H1 (cell line): ENCODE measurements at regions of chr5 and their contacts with region 1.

Region 1: GRCh38 chr5:83927140-83927733 is 206.6 kb upstream of the HAPLN1 start:
- DNase-seq: peak; percentile 79 to 98
- H3K4me3 ChIP-seq: no peak overlapping the region
- H3K27ac ChIP-seq: no peak overlapping the region
- H3K4me1 ChIP-seq: no peaks in the 10 kb centered on the region
- H3K27me3 ChIP-seq: no peaks in the 10 kb centered on the region
- CTCF ChIP-seq: peak; percentile 58 to 93 (median 84)
- EP300 ChIP-seq: no peak
- POLR2A ChIP-seq: no peak
- RAD21 ChIP-seq: peak; percentile 94 to 95

Region 2: DNA sequence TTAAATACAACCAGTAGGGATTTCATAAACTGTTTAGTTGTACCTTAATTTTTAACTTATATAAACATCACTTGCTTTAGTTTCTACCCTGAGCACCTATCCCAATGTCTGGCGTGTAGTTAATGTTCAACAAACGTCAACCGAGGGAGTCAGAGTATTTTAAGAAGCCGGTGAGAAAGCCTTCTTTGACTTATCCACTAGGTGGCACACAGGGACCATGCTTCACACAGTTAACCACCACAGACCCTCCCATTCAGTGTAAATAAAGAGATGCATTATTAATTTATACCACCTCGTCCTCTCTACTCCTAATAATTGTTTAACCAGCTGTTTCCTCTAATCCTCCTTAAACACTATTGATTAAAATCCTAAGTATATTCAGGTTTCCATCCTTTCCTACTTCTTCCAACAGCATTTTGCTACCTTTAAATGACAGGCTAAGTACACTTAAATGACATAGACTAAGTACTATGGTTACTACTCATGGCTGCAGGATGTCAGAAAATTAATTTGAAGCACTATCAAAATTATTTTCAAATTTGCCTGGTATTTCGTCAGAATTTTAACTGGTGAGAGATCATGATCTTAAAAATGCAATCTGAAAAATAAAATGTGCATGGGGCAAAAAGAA is 208.9 kb before region 1 on chr5:
- CTCF ChIA-PET with region 1: interaction called, 29 read pairs
- POLR2A ChIA-PET with region 1: interaction called, 5 read pairs
- DNase-seq: no peak
- H3K4me3 ChIP-seq: no peak overlapping the region
- H3K27ac ChIP-seq: no peak overlapping the region
- H3K4me1 ChIP-seq: peaks cover 0 to 19% (median 10%) of the 10 kb centered on the region in 4 experiments; a peak in 4 of 7 replicates
- H3K27me3 ChIP-seq: peaks cover 0 to 2% (median 0%) of the 10 kb centered on the region in 4 experiments; a peak in 2 of 7 replicates
- CTCF ChIP-seq: peak in 2 of 3 experiments; percentile 71 to 79; a peak in 3 of 4 replicates
- EP300 ChIP-seq: no peak
- POLR2A ChIP-seq: no peak
- RAD21 ChIP-seq: peak; percentile 97

Region 3: GRCh38 chr5:83777856-83778255 is 149.4 kb before region 1 on chr5:
- CTCF ChIA-PET with region 1: no interaction called
- POLR2A ChIA-PET with region 1: no interaction called
- DNase-seq: no peak
- H3K4me3 ChIP-seq: no peak overlapping the region
- H3K27ac ChIP-seq: no peak overlapping the region
- H3K4me1 ChIP-seq: no peaks in the 10 kb centered on the region
- H3K27me3 ChIP-seq: peaks cover 0 to 2% (median 0%) of the 10 kb centered on the region in 4 experiments; a peak in 1 of 7 replicates
- CTCF ChIP-seq: no peak
- EP300 ChIP-seq: no peak
- POLR2A ChIP-seq: no peak
- RAD21 ChIP-seq: no peak

Region 4: GRCh38 chr5:83856881-83857280 is 70.4 kb before region 1 on chr5:
- CTCF ChIA-PET with region 1: no interaction called
- POLR2A ChIA-PET with region 1: no interaction called
- DNase-seq: no peak
- H3K4me3 ChIP-seq: no peak overlapping the region
- H3K27ac ChIP-seq: no peak overlapping the region
- H3K4me1 ChIP-seq: no peaks in the 10 kb centered on the region
- H3K27me3 ChIP-seq: no peaks in the 10 kb centered on the region
- CTCF ChIP-seq: no peak
- EP300 ChIP-seq: no peak
- POLR2A ChIP-seq: no peak
- RAD21 ChIP-seq: no peak

Region 5: DNA sequence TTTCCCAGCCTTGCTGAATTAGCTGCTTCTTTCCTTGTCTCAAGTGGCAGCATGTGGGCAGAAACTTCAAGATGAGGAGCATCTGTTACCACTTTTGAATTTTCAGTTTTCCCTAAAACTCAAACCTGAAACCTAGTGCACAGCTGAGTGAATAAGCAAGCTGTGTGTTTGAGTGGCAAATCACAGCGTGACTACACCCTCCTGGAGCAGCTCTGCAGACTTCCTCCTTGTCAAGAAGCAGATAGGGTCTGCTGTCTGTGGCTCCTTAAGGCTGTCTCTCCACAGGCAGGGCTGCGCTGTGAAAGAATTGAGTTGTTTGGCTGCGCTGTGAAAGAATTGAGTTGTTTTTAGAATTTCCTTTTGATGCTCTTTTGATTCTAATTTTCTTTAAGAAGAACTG is 26.9 kb before region 1 on chr5:
- CTCF ChIA-PET with region 1: interaction called, 13 read pairs
- POLR2A ChIA-PET with region 1: no interaction called
- DNase-seq: no peak
- H3K4me3 ChIP-seq: no peak overlapping the region
- H3K27ac ChIP-seq: no peak overlapping the region
- H3K4me1 ChIP-seq: no peaks in the 10 kb centered on the region
- H3K27me3 ChIP-seq: no peaks in the 10 kb centered on the region
- CTCF ChIP-seq: no peak
- EP300 ChIP-seq: no peak
- POLR2A ChIP-seq: no peak
- RAD21 ChIP-seq: peak in 1 of 2 experiments; percentile 17; a peak in 1 of 4 replicates

Region 6: DNA sequence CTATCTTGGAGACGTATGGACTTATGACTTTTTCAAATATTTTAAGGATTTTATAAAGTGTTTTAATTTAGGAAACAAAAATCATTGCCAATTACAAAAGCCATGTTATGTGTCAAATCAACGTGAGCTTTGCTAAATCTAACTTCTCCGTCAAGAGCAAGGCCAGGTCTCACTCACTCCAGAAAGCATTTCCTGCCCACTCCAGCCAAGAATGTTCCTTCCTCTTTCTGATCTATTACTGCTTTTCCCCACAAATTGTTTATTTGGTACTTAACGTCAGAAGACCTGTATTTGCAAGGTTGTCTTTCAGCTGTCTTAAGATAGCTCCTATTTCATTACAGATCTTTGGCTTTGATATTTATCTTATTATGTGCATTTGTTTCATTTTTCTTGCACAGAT is 13.0 kb before region 1 on chr5:
- CTCF ChIA-PET with region 1: interaction called, 74 read pairs
- POLR2A ChIA-PET with region 1: no interaction called
- DNase-seq: no peak
- H3K4me3 ChIP-seq: no peak overlapping the region
- H3K27ac ChIP-seq: no peak overlapping the region
- H3K4me1 ChIP-seq: peaks cover 0 to 3% (median 0%) of the 10 kb centered on the region in 4 experiments; a peak in 1 of 7 replicates
- H3K27me3 ChIP-seq: no peaks in the 10 kb centered on the region
- CTCF ChIP-seq: no peak
- EP300 ChIP-seq: no peak
- POLR2A ChIP-seq: no peak
- RAD21 ChIP-seq: no peak

Region 7: DNA sequence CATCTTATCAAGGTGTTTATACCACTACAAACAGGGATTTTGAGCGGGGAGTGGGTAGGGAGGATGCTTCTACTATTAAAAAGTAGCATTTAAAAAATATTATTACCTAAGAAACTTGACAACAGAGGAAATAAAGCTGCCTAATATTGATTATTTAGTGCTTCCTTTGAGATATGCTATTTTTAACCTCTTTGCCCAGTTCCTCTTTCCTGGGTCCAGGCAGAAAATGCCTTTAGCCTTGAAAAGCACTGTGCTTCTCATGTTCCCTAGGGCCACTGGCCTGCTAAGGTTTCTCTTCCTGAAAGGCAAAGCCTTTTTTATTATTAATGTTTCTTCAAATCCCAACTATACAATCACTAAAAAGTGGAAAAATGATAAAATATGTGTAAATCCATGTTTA is 10.6 kb after region 1 on chr5:
- CTCF ChIA-PET with region 1: interaction called, 15 read pairs
- POLR2A ChIA-PET with region 1: no interaction called
- DNase-seq: no peak
- H3K4me3 ChIP-seq: no peak overlapping the region
- H3K27ac ChIP-seq: no peak overlapping the region
- H3K4me1 ChIP-seq: no peaks in the 10 kb centered on the region
- H3K27me3 ChIP-seq: no peaks in the 10 kb centered on the region
- CTCF ChIP-seq: no peak
- EP300 ChIP-seq: no peak
- POLR2A ChIP-seq: no peak
- RAD21 ChIP-seq: no peak

Region 8: GRCh38 chr5:84017523-84018230 is 90.4 kb after region 1 on chr5:
- CTCF ChIA-PET with region 1: interaction called, 13 read pairs
- POLR2A ChIA-PET with region 1: no interaction called
- DNase-seq: no peak
- H3K4me3 ChIP-seq: no peak overlapping the region
- H3K27ac ChIP-seq: no peak overlapping the region
- H3K4me1 ChIP-seq: peaks cover 0 to 2% (median 0%) of the 10 kb centered on the region in 4 experiments; a peak in 1 of 7 replicates
- H3K27me3 ChIP-seq: no peaks in the 10 kb centered on the region
- CTCF ChIP-seq: no peak
- EP300 ChIP-seq: no peak
- POLR2A ChIP-seq: no peak
- RAD21 ChIP-seq: no peak

Region 9: DNA sequence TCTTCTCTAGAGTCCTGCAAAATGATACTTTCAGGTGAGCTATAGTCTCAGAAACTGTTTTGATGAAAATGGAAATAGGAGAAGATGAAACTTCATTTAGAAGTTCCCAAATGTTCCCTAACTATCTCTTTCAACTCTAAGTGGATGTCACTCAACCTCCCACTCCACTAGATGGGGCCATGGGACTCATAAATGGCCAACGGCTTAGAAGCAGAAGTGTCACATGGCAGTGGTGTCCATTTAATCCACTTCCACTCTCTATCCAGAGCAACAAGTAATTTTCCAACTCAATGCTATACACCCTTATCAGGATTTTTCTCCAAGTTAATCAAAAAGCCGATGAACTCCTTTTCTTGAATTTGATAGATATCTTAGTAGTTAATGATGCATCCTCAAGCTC is 161.8 kb after region 1 on chr5:
- CTCF ChIA-PET with region 1: interaction called, 10 read pairs
- POLR2A ChIA-PET with region 1: no interaction called
- DNase-seq: no peak
- H3K4me3 ChIP-seq: no peak overlapping the region
- H3K27ac ChIP-seq: no peak overlapping the region
- H3K4me1 ChIP-seq: no peaks in the 10 kb centered on the region
- H3K27me3 ChIP-seq: no peaks in the 10 kb centered on the region
- CTCF ChIP-seq: peak in 1 of 3 experiments; percentile 37; a peak in 1 of 4 replicates
- EP300 ChIP-seq: no peak
- POLR2A ChIP-seq: no peak
- RAD21 ChIP-seq: peak; percentile 55 to 64